Panc1 (cell line): ENCODE measurements at regions of chr11 and their contacts with region 1.

Region 1: GRCh38 chr11:33065445-33066178 is 26.2 kb downstream of the TCP11L1 start:
- DNase-seq: peak; percentile 12
- ATAC-seq: peak; percentile 94
- H3K4me3 ChIP-seq: no peak overlapping the region
- H3K27ac ChIP-seq: no peak overlapping the region
- H3K4me1 ChIP-seq: no peaks in the 10 kb centered on the region
- H3K27me3 ChIP-seq: no peaks in the 10 kb centered on the region
- CTCF ChIP-seq: peak; percentile 97

Region 2: DNA sequence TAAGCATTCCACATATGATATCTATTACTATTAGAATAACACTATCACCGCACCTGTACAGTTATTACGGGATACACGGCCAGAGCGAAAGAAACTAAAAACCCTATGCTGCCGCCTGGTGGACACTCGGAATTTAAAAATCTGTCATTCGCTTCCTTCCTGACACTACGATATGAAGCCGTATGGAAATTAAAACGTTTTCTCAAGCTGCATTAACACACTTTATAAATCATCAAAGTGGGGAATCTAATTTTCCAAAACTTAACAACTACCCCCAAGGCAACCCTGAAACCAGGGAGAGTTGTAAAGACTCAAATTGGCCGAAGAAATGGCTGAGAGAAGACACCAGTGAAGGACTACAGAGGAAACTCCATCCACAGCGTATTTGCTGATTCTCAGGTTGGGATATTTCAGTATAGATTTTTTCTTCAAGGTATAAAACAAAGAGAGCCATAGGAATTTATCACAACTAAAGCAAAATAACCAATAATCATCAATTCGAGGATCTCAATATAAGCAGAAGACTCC is 272.6 kb before region 1 on chr11:
- CTCF ChIA-PET with region 1: no interaction called
- POLR2A ChIA-PET with region 1: no interaction called
- in situ Hi-C with region 1: no loop called
- intact Hi-C with region 1: no loop called
- DNase-seq: peak; percentile 51
- ATAC-seq: peak; percentile 95
- H3K4me3 ChIP-seq: peak overlapping the region; percentile 8 to 34; a peak in 3 of 4 replicates
- H3K27ac ChIP-seq: no peak overlapping the region
- H3K4me1 ChIP-seq: 0 out of 2 replicates have a peak, but pooled peaks cover 4% of the 10 kb centered on the region
- H3K27me3 ChIP-seq: peaks cover 1% of the 10 kb centered on the region; the same call in 1 of the 2 replicates
- CTCF ChIP-seq: peak; percentile 81

Region 3: GRCh38 chr11:32809313-32809712 is 256.3 kb before region 1 on chr11:
- CTCF ChIA-PET with region 1: no interaction called
- POLR2A ChIA-PET with region 1: no interaction called
- in situ Hi-C with region 1: no loop called
- intact Hi-C with region 1: loop called (anchors 10 kb)
- DNase-seq: peak; percentile 77
- ATAC-seq: peak; percentile 99
- H3K4me3 ChIP-seq: no peak overlapping the region
- H3K27ac ChIP-seq: no peak overlapping the region
- H3K4me1 ChIP-seq: no peaks in the 10 kb centered on the region
- H3K27me3 ChIP-seq: peaks cover 4% of the 10 kb centered on the region; the same call in 1 of the 2 replicates
- CTCF ChIP-seq: peak; percentile 91

Region 4: GRCh38 chr11:32947978-32948377 is 117.6 kb before region 1 on chr11:
- CTCF ChIA-PET with region 1: no interaction called
- POLR2A ChIA-PET with region 1: no interaction called
- in situ Hi-C with region 1: no loop called
- intact Hi-C with region 1: no loop called
- DNase-seq: no peak
- ATAC-seq: no peak; the same call in 1 of the 2 replicates
- H3K4me3 ChIP-seq: no peak overlapping the region
- H3K27ac ChIP-seq: no peak overlapping the region
- H3K4me1 ChIP-seq: peaks cover 2% of the 10 kb centered on the region; the same call in 1 of the 2 replicates
- H3K27me3 ChIP-seq: no peaks in the 10 kb centered on the region
- CTCF ChIP-seq: no peak